Transverse colon (tissue), 4 donors: ENCODE measurements at regions of chr2 and their contacts with region 1.

Region 1: GRCh38 chr2:12824351-12824777 is 107.6 kb downstream of the TRIB2 start:
- DNase-seq: no peak
- H3K4me3 ChIP-seq: no peak overlapping the region
- H3K27ac ChIP-seq: peak overlapping the region; percentile 54 to 67 (median 55)
- H3K4me1 ChIP-seq: peaks cover 0 to 7% (median 3%) of the 10 kb centered on the region in 4 donors
- H3K27me3 ChIP-seq: no peaks in the 10 kb centered on the region
- CTCF ChIP-seq: no peak
- EP300 ChIP-seq: no peak
- POLR2A ChIP-seq: no peak

Region 2: DNA sequence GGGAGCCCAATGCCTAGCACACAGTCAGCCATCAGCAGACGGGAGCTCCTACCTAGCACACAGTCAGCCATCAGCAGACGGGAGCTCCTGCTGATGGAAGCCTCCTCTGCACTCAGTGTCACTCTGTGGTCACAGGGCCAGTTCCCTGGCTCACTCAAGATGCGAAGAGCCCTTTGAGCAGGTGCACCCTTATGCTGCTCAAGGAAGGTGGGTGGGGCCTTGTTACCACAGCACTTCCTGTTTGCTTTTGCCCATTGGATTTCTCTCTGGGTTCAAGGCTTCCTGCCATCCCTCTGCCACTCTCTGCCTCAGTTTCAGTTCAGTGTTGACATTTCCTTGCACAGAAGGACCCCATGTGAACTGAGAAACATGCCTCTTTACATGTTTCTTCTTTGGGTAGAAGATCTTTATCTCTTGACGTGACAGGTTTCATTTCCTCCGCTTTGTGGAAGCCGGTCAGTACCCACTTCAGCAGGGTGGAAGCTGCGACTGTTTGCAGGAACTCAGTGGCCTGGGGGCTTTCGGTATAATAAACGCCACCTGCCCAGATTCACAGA is 96.1 kb before region 1 on chr2:
- in situ Hi-C with region 1: no loop called
- intact Hi-C with region 1: loop called (anchors 10 kb)
- DNase-seq: peak; percentile 43
- H3K4me3 ChIP-seq: no peak overlapping the region
- H3K27ac ChIP-seq: peak overlapping the region in 3 of 4 donors; percentile 5 to 50 (median 12)
- H3K4me1 ChIP-seq: peaks cover 8 to 40% (median 18%) of the 10 kb centered on the region in 4 donors
- H3K27me3 ChIP-seq: no peaks in the 10 kb centered on the region
- CTCF ChIP-seq: no peak
- EP300 ChIP-seq: no peak
- POLR2A ChIP-seq: no peak